ENCODE measurements at regions of chr6 and their contacts with region 1.

Region 1: GRCh38 chr6:111918825-111919224 is 45.6 kb upstream of the FYN start:
- DNase-seq: peak; percentile 38 to 54 (median 40)
- H3K4me3 ChIP-seq: peak overlapping the region in 1 of 3 experiments; percentile 19
- H3K4me3 Mint-ChIP-seq: peak overlapping the region; percentile 43 to 55
- H3K27ac ChIP-seq: peak overlapping the region in 1 of 2 donors; percentile 51
- H3K27ac Mint-ChIP-seq: peak overlapping the region in 6 of 7 donors; percentile 61 to 89 (median 76)
- H3K4me1 ChIP-seq: peaks cover 31 to 36% of the 10 kb centered on the region in 2 donors
- H3K4me1 Mint-ChIP-seq: peaks cover 37% of the 10 kb centered on the region
- H3K27me3 ChIP-seq: no peaks in the 10 kb centered on the region
- H3K27me3 Mint-ChIP-seq: peaks cover 0 to 2% (median 1%) of the 10 kb centered on the region in 3 donors
- CTCF ChIP-seq: no peak

Region 2: DNA sequence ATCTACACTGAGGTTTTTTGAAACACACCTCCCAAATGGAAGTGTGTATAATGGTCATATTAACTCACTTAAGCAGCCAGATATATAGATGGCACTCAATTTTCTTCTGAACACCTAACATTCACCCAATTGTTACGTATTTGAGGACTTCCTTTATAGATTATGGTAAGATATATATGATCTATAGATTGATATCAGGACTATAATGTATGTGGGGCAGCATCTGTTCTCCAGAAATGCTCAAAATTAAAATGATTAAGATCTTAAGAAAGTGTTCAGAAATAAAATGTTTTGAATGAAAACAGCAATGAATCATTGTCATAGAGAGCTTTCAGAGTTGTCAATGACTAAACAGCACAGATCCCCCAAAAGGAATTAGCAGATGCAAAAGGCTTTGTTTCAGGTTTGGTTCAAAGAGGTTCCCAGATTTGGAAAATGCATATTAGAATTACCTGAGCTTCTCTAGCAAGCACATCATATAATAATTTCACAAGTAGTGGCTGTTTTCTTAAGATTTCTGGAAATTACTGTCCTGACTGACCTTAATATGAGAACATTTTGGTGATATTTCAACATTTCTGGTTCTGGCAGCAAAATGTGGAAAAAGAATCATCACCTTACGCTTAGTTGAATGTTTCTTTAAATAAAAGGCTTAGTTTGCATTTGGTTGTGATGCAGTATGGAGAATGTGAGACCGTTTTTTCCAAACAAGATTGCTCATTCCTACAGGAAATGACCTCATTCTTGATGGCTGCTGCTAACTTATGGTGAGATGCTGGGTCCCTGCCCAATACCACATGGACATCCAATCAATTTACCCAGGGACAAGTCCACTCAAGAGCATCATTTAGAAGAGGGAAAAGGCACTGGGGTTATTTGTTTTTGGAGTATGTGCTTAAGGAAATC is 344.7 kb before region 1 on chr6:
- intact Hi-C with region 1: no loop called
- DNase-seq: peak; percentile 33 to 66 (median 46)
- H3K4me3 ChIP-seq: no peak overlapping the region
- H3K4me3 Mint-ChIP-seq: no peak overlapping the region
- H3K27ac ChIP-seq: peak overlapping the region in 1 of 2 donors; percentile 91
- H3K27ac Mint-ChIP-seq: peak overlapping the region; percentile 51 to 97 (median 95)
- H3K4me1 ChIP-seq: peaks cover 24 to 29% of the 10 kb centered on the region in 2 donors
- H3K4me1 Mint-ChIP-seq: peaks cover 32% of the 10 kb centered on the region
- H3K27me3 ChIP-seq: no peaks in the 10 kb centered on the region
- H3K27me3 Mint-ChIP-seq: no peaks in the 10 kb centered on the region
- CTCF ChIP-seq: no peak

Region 3: DNA sequence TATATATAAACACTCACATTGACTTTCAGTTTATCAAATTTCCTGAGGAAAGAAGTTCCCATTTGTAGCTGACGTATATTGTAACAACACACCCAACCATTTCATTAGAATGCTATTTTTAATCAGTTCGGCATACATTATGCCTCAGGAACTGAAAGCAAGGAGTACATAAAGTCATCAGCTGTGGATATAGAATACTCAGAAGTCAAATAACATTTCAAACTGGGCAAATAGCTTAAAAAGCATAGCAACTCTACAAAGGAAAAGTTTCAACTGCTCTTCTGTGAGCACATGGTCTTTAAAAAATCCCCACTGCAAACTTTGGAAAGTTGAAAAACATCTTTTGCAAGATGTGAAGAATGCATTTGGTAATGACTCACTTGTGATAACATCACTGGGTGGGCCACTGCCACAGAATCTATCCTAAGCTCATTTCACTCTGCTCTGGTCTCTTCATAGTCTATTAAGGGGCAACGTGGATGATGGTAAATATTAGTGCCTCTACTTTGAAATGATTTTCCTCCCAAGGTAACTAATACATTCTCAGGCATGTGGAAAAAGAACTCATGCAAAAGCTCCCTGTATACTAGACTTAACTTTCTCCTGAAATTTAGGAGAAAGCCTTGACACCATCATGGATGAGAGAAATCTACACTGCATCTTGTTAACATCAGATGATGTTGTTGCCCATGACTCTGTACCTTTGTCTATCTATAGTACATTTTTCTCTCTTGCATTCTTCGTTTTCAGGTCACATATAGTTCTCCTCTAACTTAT is 94.8 kb before region 1 on chr6:
- intact Hi-C with region 1: no loop called
- DNase-seq: peak in 2 of 3 donors; percentile 32 to 72
- H3K4me3 ChIP-seq: peak overlapping the region in 1 of 3 experiments; percentile 18
- H3K4me3 Mint-ChIP-seq: peak overlapping the region; percentile 45 to 57
- H3K27ac ChIP-seq: peak overlapping the region in 1 of 2 donors; percentile 76
- H3K27ac Mint-ChIP-seq: peak overlapping the region; percentile 80 to 97 (median 89)
- H3K4me1 ChIP-seq: peaks cover 21 to 24% of the 10 kb centered on the region in 2 donors
- H3K4me1 Mint-ChIP-seq: peaks cover 34% of the 10 kb centered on the region
- H3K27me3 ChIP-seq: no peaks in the 10 kb centered on the region
- H3K27me3 Mint-ChIP-seq: no peaks in the 10 kb centered on the region
- CTCF ChIP-seq: no peak

Region 4: DNA sequence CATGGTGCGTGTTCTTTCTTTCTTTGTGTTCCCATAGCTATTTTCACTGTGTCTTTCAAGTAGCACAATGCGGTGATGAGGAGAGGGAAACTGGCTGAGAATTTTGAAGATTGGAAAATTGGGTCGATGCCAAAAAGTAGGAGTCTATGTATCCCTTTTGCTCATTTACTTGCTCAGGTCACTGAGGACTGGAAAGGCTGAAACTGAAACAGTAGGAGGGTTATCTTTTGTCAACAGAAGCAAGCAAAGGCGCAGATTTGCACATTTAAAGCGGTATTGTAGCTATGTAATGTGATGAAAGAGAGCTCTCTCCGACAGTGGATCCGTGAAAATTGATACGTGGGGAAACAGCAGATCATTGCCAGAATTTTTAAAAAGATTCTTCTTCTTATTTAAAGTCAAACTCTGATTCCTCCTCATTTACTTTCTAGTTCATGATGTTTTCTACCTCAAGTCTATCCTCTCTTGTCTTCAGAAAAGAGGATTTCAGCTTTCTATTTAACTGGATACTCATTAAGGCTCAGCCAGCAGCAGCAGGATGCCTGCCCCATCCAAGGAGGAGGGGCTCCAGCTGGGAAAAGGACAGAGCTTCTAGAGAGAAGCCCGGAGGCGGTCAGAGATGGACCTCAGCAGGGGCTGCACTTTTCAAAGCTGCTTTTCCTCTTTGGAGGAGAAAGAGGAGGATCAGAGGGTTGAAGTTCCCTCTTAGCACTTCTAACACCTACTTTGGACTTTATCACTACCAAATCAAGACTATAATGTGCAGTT is 29.7 kb before region 1 on chr6:
- intact Hi-C with region 1: loop called in 1 of 2 experiments (anchors 5 kb)
- DNase-seq: no peak
- H3K4me3 ChIP-seq: no peak overlapping the region
- H3K4me3 Mint-ChIP-seq: no peak overlapping the region
- H3K27ac ChIP-seq: no peak overlapping the region
- H3K27ac Mint-ChIP-seq: no peak overlapping the region
- H3K4me1 ChIP-seq: no peaks in the 10 kb centered on the region
- H3K4me1 Mint-ChIP-seq: no peaks in the 10 kb centered on the region
- H3K27me3 ChIP-seq: peaks cover 0 to 4% of the 10 kb centered on the region in 2 donors
- H3K27me3 Mint-ChIP-seq: peaks cover 2 to 5% (median 2%) of the 10 kb centered on the region in 3 donors
- CTCF ChIP-seq: no peak

Region 5: GRCh38 chr6:112149719-112150263 is 231.0 kb after region 1 on chr6:
- intact Hi-C with region 1: no loop called
- DNase-seq: no peak
- H3K4me3 ChIP-seq: no peak overlapping the region
- H3K4me3 Mint-ChIP-seq: no peak overlapping the region
- H3K27ac ChIP-seq: no peak overlapping the region
- H3K27ac Mint-ChIP-seq: no peak overlapping the region
- H3K4me1 ChIP-seq: peaks cover 0 to 9% of the 10 kb centered on the region in 2 donors
- H3K4me1 Mint-ChIP-seq: peaks cover 13% of the 10 kb centered on the region
- H3K27me3 ChIP-seq: no peaks in the 10 kb centered on the region
- H3K27me3 Mint-ChIP-seq: peaks cover 0 to 4% (median 3%) of the 10 kb centered on the region in 3 donors
- CTCF ChIP-seq: no peak

Measured in CD14-positive monocyte (primary cell).